ENCODE measurements at regions of chr16 and their contacts with region 1.

Region 1: DNA sequence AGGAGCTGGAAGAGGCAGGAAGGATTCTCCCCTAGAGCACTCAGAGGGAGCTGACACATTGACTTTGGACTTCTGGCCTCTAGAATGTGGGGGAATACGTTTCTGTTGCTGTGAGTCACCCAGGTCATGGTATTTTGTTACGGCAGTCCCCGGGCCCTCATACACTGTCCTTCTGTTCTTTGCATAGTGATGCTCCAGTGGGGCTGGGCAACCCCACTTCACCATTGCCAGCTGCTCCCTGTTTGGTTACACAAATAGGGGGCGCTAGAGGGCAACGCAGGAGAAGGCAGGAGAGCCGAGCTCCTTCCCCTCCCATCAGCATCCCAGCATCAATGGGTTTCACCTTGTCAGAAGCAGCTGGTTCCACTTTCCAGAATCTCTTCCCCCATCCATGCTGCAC is 257.7 kb upstream of the FOXF1 start:
- DNase-seq: peak; percentile 77
- ATAC-seq: peak; percentile 83
- H3K4me3 Mint-ChIP-seq: no peak overlapping the region
- H3K27ac Mint-ChIP-seq: no peak overlapping the region
- H3K4me1 Mint-ChIP-seq: peaks cover 2% of the 10 kb centered on the region; the same call in 1 of the 2 replicates
- H3K27me3 Mint-ChIP-seq: no peaks in the 10 kb centered on the region; the same call in 1 of the 2 replicates
- CTCF ChIP-seq: peak; percentile 84

Region 2: DNA sequence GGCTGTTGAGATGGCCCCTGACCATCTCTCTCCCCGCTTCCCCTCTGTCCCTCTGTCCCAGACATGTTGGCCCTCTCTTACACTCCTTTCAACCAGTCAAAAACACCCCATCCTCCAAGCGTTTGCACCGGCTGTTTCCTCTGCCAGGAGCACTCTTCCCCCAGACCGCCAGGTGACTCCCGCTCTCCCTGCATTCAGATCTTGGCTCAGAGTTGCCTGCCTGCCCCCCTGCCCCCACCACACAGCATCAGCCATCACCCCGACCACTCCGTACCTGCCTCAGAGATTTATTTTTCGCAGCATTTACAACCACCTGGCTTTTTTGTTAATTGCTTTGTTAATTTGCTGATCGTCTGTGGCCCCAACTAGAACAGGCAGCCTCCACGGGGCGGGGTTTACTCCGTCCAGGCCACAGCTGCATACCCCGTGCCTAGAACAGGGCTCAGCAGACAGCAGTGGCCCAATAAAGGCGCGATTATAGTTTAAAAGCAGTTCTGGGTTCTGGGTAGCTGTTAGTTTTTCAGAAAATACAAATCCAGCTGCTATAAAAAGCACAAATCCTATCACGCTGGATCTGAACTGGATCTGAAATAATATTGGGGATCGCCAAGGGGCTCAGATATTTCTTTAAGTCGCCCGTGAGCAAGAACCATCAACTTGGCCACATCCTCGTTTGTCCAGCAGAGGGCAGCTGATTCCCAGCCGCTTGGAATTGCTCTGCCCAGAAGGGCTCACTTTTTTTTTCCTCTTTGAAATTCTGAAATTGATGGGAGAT is 180.1 kb before region 1 on chr16:
- CTCF ChIA-PET with region 1: interaction called, 30 read pairs
- POLR2A ChIA-PET with region 1: no interaction called
- DNase-seq: peak; percentile 78
- ATAC-seq: peak; percentile 75
- H3K4me3 Mint-ChIP-seq: no peak overlapping the region
- H3K27ac Mint-ChIP-seq: no peak overlapping the region
- H3K4me1 Mint-ChIP-seq: peaks cover 10% of the 10 kb centered on the region
- H3K27me3 Mint-ChIP-seq: no peaks in the 10 kb centered on the region
- CTCF ChIP-seq: peak; percentile 58

Region 3: GRCh38 chr16:86270696-86271095 is 18.1 kb after region 1 on chr16:
- CTCF ChIA-PET with region 1: interaction called, 26 read pairs
- POLR2A ChIA-PET with region 1: no interaction called
- DNase-seq: no peak
- ATAC-seq: no peak
- H3K4me3 Mint-ChIP-seq: no peak overlapping the region
- H3K27ac Mint-ChIP-seq: no peak overlapping the region
- H3K4me1 Mint-ChIP-seq: peaks cover 22% of the 10 kb centered on the region
- H3K27me3 Mint-ChIP-seq: no peaks in the 10 kb centered on the region; the same call in 1 of the 2 replicates
- CTCF ChIP-seq: no peak

Region 4: DNA sequence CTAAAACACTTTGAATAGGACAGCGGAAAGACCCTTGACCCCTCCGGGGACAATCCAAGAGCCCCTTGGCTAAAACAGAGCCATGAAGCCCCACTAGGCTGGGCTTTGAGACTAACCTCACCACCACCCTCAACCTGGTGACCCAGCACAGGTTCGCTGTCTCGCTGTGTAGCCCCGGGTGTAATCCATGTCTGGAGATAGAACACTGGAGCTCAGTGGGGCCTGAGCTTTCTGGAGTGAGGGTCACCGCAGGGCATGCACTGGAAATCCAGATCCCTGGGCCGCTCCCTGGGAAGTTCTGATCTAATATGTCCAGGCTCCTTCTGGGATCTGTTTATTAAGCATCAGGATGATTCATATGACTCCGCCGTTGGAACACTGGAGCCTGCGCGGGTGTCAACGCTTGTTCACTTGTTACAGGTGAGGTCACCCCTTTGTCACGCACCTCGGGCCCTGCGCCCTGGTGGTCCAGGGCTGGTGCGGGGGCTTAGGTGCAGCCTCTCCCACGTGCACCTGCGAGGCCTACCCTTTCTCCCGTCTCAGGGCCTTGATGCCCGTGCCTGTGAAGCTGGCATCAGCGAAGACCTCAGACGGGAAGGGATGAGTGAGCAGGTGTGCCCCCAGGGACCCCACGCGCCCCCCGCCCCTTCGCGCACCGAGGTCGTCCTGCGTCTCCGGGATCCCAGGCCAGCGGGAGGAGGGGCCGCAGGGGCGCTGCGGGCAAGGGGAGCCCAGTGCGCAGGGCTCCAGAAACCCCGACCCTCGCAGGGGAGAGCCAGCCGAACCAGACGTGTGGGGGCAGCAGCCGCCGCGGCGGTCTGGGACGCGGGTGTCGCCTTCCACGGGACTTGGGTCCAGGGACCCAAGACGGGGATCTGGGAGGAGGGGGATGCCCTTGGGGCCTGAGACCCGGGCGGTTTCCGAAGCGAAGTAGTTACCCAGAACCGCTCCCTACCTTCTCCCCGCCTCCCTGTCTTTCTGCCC is 33.6 kb after region 1 on chr16:
- CTCF ChIA-PET with region 1: interaction called, 28 read pairs
- POLR2A ChIA-PET with region 1: no interaction called
- DNase-seq: no peak
- ATAC-seq: peak; percentile 6; the same call in 1 of the 2 replicates
- H3K4me3 Mint-ChIP-seq: peak overlapping the region; percentile 78
- H3K27ac Mint-ChIP-seq: no peak overlapping the region
- H3K4me1 Mint-ChIP-seq: peaks cover 70% of the 10 kb centered on the region
- H3K27me3 Mint-ChIP-seq: peaks cover 100% of the 10 kb centered on the region
- CTCF ChIP-seq: no peak

Region 5: DNA sequence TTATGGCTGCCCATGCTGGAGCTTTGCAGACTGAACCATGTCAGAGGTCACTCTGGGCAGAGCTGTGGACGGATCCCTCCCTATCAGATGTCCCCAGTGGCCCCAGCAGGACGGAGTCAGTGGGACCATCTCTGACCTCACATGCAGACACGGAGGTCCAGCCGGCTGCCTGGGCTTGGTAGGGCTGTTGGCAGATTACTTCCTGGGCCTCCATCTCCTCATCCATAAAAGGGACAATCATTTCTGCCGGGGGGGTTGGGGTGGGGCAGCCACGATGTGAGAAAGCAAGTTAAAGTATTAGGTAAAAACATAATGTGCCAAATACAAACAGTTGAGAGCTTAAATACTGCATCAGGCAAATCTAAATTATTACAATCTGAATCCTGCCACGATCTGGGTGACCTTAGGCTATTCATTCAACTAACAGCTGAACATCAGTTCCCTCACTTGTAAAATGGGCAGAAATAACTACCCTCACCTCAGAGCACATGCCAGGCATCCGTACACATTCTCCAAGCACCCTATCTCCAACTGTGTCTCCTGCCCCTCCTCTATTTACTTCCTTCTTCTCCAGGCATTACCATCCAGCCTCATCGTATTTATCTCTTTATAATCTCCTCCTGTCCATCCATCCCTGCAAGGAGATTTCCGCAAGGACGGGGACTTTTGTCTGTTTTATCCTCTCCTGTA is 65.4 kb after region 1 on chr16:
- CTCF ChIA-PET with region 1: interaction called, 23 read pairs
- POLR2A ChIA-PET with region 1: no interaction called
- DNase-seq: no peak
- ATAC-seq: no peak
- H3K4me3 Mint-ChIP-seq: no peak overlapping the region
- H3K27ac Mint-ChIP-seq: no peak overlapping the region
- H3K4me1 Mint-ChIP-seq: peaks cover 9% of the 10 kb centered on the region; the same call in 1 of the 2 replicates
- H3K27me3 Mint-ChIP-seq: peaks cover 2% of the 10 kb centered on the region
- CTCF ChIP-seq: no peak

Region 6: GRCh38 chr16:86498661-86499439 is 246.3 kb after region 1 on chr16:
- CTCF ChIA-PET with region 1: interaction called, 15 read pairs
- POLR2A ChIA-PET with region 1: no interaction called
- DNase-seq: no peak
- ATAC-seq: no peak
- H3K4me3 Mint-ChIP-seq: peak overlapping the region; percentile 48
- H3K27ac Mint-ChIP-seq: no peak overlapping the region
- H3K4me1 Mint-ChIP-seq: peaks cover 52% of the 10 kb centered on the region
- H3K27me3 Mint-ChIP-seq: peaks cover 100% of the 10 kb centered on the region
- CTCF ChIP-seq: no peak